Panc1 (cell line): ENCODE measurements at regions of chr17 and their contacts with region 1.

Region 1: GRCh38 chr17:44487170-44487569 is 16.0 kb downstream of the GPATCH8 start:
- DNase-seq: no peak
- ATAC-seq: no peak
- H3K4me3 ChIP-seq: no peak overlapping the region
- H3K27ac ChIP-seq: no peak overlapping the region
- H3K4me1 ChIP-seq: no peaks in the 10 kb centered on the region
- H3K27me3 ChIP-seq: no peaks in the 10 kb centered on the region
- CTCF ChIP-seq: no peak

Region 2: GRCh38 chr17:44664867-44665266 is 177.7 kb after region 1 on chr17:
- CTCF ChIA-PET with region 1: no interaction called
- POLR2A ChIA-PET with region 1: interaction called, 11 read pairs
- in situ Hi-C with region 1: no loop called
- intact Hi-C with region 1: no loop called
- DNase-seq: no peak
- ATAC-seq: no peak
- H3K4me3 ChIP-seq: no peak overlapping the region
- H3K27ac ChIP-seq: no peak overlapping the region
- H3K4me1 ChIP-seq: no peaks in the 10 kb centered on the region
- H3K27me3 ChIP-seq: no peaks in the 10 kb centered on the region
- CTCF ChIP-seq: no peak